ENCODE measurements at regions of chr16 and their contacts with region 1.

Region 1: DNA sequence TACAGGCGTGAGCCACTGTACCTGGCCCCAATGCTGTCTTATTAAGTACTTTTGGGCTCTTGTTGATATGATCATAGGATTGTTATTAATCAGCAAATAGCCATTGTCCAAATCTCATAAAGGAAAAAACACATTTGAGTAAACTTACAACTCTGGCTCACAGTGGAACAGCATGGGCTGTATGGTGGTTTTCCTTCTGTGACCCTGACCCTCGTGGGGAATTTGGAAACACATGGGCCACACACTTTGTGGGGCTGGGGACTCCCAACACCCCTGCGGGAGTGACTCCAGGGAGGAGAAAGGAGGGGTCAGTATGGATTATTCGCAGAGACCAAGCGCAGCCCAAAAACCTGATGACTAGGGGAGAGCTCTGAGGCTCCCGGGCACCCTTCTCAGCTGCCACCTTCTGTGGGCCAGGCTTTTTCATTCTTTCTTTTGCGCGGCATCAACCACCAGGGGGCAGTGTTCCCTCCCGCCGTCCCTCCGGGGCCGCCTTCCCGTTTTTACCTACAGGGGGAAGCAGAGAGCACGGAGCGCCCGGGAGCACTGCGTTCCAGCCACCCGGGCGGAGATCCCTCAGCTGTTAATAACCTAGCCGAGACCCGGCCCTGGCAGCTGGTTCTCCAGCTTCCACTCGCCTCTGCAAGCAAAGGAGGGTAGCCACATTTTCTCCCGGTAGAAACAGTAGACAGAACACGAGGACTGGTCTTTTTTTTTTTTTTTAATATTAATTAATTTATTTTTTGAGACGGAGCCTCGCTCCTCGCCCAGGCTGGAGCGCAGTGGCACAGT is 9.7 kb downstream of the TSNAXIP1 start:
- DNase-seq: no peak
- ATAC-seq: peak; percentile 98
- H3K4me3 ChIP-seq: no peak overlapping the region
- H3K27ac ChIP-seq: no peak overlapping the region
- H3K4me1 ChIP-seq: no peaks in the 10 kb centered on the region
- H3K27me3 ChIP-seq: no peaks in the 10 kb centered on the region
- CTCF ChIP-seq: peak; percentile 100; a peak in 5 of 6 replicates
- EP300 ChIP-seq: no peak
- POLR2A ChIP-seq: no peak
- RAD21 ChIP-seq: peak; percentile 85

Region 2: DNA sequence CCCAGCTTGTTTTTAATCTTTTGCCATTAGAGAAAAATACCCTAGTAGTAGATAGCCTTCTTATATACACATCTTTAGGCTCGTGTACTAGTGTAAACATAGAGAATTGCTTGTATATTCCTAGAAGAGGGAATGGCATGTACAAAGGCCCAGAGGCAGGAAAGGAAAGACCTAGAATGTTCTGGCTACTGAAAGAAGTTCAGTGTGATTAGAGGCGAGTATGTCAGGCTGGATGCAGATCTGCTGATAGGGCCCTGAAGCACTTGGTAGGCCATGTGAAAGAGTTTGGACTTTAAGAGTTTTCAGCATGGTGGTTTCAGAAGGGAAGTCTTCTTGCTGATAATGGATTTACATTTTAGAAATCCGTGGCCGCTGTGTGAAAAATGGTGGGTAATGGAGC is 236.8 kb before region 1 on chr16:
- CTCF ChIA-PET with region 1: no interaction called
- POLR2A ChIA-PET with region 1: no interaction called
- RAD21 ChIA-PET with region 1: no interaction called
- SMC1A ChIA-PET with region 1: no interaction called
- in situ Hi-C with region 1: no loop called
- intact Hi-C with region 1: no loop called
- DNase-seq: no peak
- ATAC-seq: no peak
- H3K4me3 ChIP-seq: no peak overlapping the region
- H3K27ac ChIP-seq: no peak overlapping the region
- H3K4me1 ChIP-seq: no peaks in the 10 kb centered on the region
- H3K27me3 ChIP-seq: no peaks in the 10 kb centered on the region
- CTCF ChIP-seq: no peak
- EP300 ChIP-seq: no peak
- POLR2A ChIP-seq: no peak
- RAD21 ChIP-seq: no peak

Region 3: GRCh38 chr16:67595033-67595355 is 221.4 kb before region 1 on chr16:
- CTCF ChIA-PET with region 1: no interaction called
- POLR2A ChIA-PET with region 1: no interaction called
- RAD21 ChIA-PET with region 1: no interaction called
- SMC1A ChIA-PET with region 1: no interaction called
- in situ Hi-C with region 1: no loop called
- intact Hi-C with region 1: no loop called
- DNase-seq: no peak
- ATAC-seq: no peak
- H3K4me3 ChIP-seq: no peak overlapping the region
- H3K27ac ChIP-seq: no peak overlapping the region
- H3K4me1 ChIP-seq: no peaks in the 10 kb centered on the region
- H3K27me3 ChIP-seq: no peaks in the 10 kb centered on the region
- CTCF ChIP-seq: no peak
- EP300 ChIP-seq: no peak
- POLR2A ChIP-seq: no peak
- RAD21 ChIP-seq: no peak

Region 4: GRCh38 chr16:67667817-67668494 is 148.5 kb before region 1 on chr16:
- CTCF ChIA-PET with region 1: interaction called, 25 read pairs
- POLR2A ChIA-PET with region 1: interaction called, 6 read pairs
- RAD21 ChIA-PET with region 1: interaction called, 19 read pairs
- SMC1A ChIA-PET with region 1: interaction called, 3 read pairs
- in situ Hi-C with region 1: no loop called
- intact Hi-C with region 1: loop called (anchors 1 kb)
- DNase-seq: peak; percentile 70
- ATAC-seq: peak; percentile 88
- H3K4me3 ChIP-seq: no peak overlapping the region
- H3K27ac ChIP-seq: no peak overlapping the region
- H3K4me1 ChIP-seq: peaks cover 34% of the 10 kb centered on the region
- H3K27me3 ChIP-seq: no peaks in the 10 kb centered on the region
- CTCF ChIP-seq: peak; percentile 91 to 94 (median 92)
- EP300 ChIP-seq: no peak
- POLR2A ChIP-seq: no peak
- RAD21 ChIP-seq: peak; percentile 67

Region 5: GRCh38 chr16:67781565-67781921 is 34.9 kb before region 1 on chr16:
- CTCF ChIA-PET with region 1: interaction called, 22 read pairs
- POLR2A ChIA-PET with region 1: no interaction called
- RAD21 ChIA-PET with region 1: interaction called, 5 read pairs
- SMC1A ChIA-PET with region 1: interaction called, 3 read pairs
- in situ Hi-C with region 1: no loop called
- intact Hi-C with region 1: no loop called
- DNase-seq: no peak
- ATAC-seq: peak; percentile 75
- H3K4me3 ChIP-seq: no peak overlapping the region
- H3K27ac ChIP-seq: peak overlapping the region; percentile 14; the same call in 1 of the 2 replicates
- H3K4me1 ChIP-seq: peaks cover 33% of the 10 kb centered on the region
- H3K27me3 ChIP-seq: no peaks in the 10 kb centered on the region
- CTCF ChIP-seq: no peak
- EP300 ChIP-seq: no peak
- POLR2A ChIP-seq: no peak
- RAD21 ChIP-seq: no peak

Region 6: DNA sequence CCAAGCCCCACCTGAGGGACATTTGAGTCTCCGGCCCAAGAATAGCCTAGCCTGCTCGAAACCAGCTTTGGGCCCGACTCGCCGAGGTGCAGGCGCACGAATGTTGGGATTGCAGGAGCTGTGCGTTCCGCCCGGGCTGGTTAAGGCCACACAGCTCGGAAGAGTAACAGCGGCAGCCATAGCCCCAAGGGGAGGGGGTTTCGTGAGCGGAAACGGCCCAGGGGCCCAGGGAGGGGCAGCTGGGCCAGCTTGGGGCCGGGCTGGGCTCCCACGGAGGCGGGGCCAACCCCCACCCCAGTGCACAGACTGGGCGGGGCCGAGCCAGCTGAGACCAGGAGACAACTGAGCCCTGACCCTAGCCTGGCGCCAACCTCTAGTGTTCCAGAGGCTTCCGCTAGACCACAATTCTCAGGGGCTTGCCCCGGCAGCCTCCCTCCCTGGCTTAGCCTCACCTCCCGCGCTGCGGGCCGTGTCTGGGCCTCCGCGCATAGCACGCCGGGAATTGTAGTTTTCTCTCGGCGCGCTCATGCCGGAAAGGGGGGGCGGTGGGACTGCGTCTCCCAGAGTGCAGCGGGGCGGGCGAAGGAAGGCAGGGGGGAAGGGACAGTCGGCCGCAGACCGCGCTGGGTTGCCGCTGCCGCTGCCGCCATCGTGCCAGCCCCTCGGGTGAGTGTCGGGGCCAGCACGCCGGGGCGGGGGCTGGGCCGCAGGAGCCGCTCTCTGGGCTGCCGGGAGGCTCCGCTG is 30.1 kb after region 1 on chr16 and contains the start of gene NUTF2:
- CTCF ChIA-PET with region 1: interaction called, 24 read pairs
- POLR2A ChIA-PET with region 1: interaction called, 3 read pairs
- RAD21 ChIA-PET with region 1: interaction called, 3 read pairs
- SMC1A ChIA-PET with region 1: interaction called, 5 read pairs
- in situ Hi-C with region 1: no loop called
- intact Hi-C with region 1: no loop called
- DNase-seq: peak; percentile 85
- ATAC-seq: peak; percentile 75
- H3K4me3 ChIP-seq: peak within 1 kb of the TSS; percentile 84
- H3K27ac ChIP-seq: peak within 1 kb of the TSS; percentile 81
- H3K4me1 ChIP-seq: peaks cover 28% of the 10 kb centered on the region
- H3K27me3 ChIP-seq: no peaks in the 10 kb centered on the region
- CTCF ChIP-seq: 0 out of 6 replicates have a peak, but pooled peaks of 1 of the 3 experiments have one; percentile 0
- EP300 ChIP-seq: peak in 1 of 2 experiments; percentile 10; a peak in 1 of 4 replicates
- POLR2A ChIP-seq: peak; percentile 88
- RAD21 ChIP-seq: no peak
- polyA plus RNA-seq, gene NUTF2: 220 to 245 TPM

Region 7: DNA sequence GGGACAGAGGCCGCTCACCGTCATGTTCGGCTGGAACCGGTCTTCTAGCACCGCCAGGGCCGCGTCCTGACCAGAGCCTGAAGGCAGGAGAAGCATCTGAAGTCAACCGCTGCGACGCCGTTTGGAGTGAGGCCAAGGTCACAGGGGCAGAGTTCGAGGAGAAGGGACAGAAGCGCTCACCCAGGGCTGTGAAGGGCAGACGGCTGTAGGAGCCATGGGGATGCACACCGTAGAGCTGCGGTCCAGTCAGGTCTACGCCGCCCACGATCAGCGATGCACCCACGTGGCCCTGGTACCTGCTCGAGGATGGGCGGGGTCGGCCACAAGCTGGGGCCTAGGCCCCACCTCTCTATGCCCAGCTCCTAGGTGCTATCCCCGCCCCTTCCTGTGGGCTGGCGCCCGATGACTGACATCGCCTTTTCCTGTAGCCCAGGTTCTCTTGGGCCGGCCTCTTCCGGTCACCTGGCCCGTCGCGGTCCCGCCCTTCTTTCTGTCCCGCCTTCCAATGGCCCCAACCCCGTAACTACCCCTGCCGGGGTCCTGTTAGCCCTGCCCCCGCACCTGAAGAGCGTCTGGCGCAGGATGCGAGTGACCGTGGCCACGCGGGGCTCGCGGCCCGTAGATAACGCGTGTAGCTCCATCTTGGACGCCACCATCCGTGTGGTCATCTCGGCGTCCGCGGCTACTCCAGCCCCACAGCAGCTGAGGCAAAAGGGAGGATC is 119.1 kb after region 1 on chr16:
- CTCF ChIA-PET with region 1: interaction called, 10 read pairs
- POLR2A ChIA-PET with region 1: no interaction called
- RAD21 ChIA-PET with region 1: interaction called, 6 read pairs
- SMC1A ChIA-PET with region 1: interaction called, 5 read pairs
- in situ Hi-C with region 1: no loop called
- intact Hi-C with region 1: no loop called
- DNase-seq: peak; percentile 84
- ATAC-seq: peak; percentile 94
- H3K4me3 ChIP-seq: peak overlapping the region; percentile 89
- H3K27ac ChIP-seq: peak overlapping the region; percentile 98
- H3K4me1 ChIP-seq: peaks cover 12% of the 10 kb centered on the region
- H3K27me3 ChIP-seq: no peaks in the 10 kb centered on the region
- CTCF ChIP-seq: no peak
- EP300 ChIP-seq: no peak
- POLR2A ChIP-seq: peak; percentile 91
- RAD21 ChIP-seq: no peak

Region 8: DNA sequence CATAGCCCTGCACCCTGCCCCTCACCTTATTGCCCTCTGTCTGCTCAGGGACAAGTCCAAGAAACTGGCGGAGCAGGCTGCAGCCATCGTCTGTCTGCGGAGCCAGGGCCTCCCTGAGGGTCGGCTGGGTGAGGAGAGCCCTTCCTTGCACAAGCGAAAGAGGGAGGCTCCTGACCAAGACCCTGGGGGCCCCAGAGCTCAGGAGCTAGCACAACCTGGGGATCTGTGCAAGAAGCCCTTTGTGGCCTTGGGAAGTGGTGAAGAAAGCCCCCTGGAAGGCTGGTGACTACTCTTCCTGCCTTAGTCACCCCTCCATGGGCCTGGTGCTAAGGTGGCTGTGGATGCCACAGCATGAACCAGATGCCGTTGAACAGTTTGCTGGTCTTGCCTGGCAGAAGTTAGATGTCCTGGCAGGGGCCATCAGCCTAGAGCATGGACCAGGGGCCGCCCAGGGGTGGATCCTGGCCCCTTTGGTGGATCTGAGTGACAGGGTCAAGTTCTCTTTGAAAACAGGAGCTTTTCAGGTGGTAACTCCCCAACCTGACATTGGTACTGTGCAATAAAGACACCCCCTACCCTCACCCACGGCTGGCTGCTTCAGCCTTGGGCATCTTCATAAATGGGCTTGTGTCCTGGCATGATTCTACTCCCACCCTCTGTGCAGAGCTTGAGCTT is 262.4 kb after region 1 on chr16:
- CTCF ChIA-PET with region 1: no interaction called
- POLR2A ChIA-PET with region 1: no interaction called
- RAD21 ChIA-PET with region 1: no interaction called
- SMC1A ChIA-PET with region 1: no interaction called
- in situ Hi-C with region 1: no loop called
- intact Hi-C with region 1: no loop called
- DNase-seq: no peak
- ATAC-seq: no peak
- H3K4me3 ChIP-seq: no peak overlapping the region
- H3K27ac ChIP-seq: peak overlapping the region; percentile 67; the same call in 1 of the 2 replicates
- H3K4me1 ChIP-seq: peaks cover 44% of the 10 kb centered on the region
- H3K27me3 ChIP-seq: no peaks in the 10 kb centered on the region
- CTCF ChIP-seq: no peak
- EP300 ChIP-seq: no peak
- POLR2A ChIP-seq: no peak
- RAD21 ChIP-seq: no peak

Region 9: DNA sequence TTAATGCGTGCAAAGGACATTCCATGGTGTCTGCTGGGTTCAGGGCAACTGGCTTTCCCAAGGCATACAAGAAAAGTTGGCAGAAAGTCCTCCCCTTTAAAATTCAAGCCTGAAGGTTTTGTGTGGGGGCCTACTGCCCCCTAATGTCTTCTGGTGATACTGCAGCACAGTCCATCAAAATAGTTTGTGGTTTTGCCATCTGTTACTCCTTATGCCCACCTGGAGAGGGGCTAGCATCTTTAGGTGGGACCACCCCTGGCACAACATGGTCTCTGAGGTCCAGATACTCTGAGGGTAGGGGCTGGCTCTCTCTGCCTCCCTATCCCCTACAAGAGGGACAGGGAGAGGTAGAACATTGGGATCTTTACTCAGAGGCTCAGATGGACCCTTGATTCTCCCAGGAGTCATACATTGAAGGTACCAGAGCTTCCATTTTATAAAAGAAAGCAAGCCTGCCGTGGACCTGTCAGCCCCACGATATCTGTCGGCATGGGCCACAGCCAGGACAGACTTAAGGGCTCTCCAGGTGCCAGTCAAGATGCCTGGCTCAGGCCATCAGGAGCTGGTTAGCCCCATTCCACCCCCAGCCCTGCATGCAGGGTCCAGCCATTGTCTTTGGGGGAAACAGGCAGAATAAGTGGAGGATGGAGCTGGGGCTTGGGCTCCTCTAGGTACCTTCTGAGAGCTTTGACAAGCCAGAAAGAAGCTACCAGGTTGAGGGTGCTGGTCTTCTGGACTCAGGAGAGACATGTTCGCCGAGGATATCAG is 413.2 kb after region 1 on chr16:
- CTCF ChIA-PET with region 1: interaction called, 4 read pairs
- POLR2A ChIA-PET with region 1: no interaction called
- RAD21 ChIA-PET with region 1: interaction called, 3 read pairs
- SMC1A ChIA-PET with region 1: interaction called, 3 read pairs
- in situ Hi-C with region 1: no loop called
- intact Hi-C with region 1: loop called (anchors 2 kb)
- DNase-seq: no peak
- ATAC-seq: peak; percentile 47
- H3K4me3 ChIP-seq: no peak overlapping the region
- H3K27ac ChIP-seq: no peak overlapping the region
- H3K4me1 ChIP-seq: peaks cover 12% of the 10 kb centered on the region
- H3K27me3 ChIP-seq: no peaks in the 10 kb centered on the region
- CTCF ChIP-seq: peak; percentile 87 to 90 (median 88)
- EP300 ChIP-seq: no peak
- POLR2A ChIP-seq: no peak
- RAD21 ChIP-seq: peak; percentile 94